Activated CD4-positive, alpha-beta memory T cell treated with anti-CD3 and anti-CD28 coated beads, Interleukin-2, amount 10 ng/mL, durations not matched to agents 7 days and 5 days (primary cell): ENCODE measurements at regions of chr11 and their contacts with region 1.

Region 1: DNA sequence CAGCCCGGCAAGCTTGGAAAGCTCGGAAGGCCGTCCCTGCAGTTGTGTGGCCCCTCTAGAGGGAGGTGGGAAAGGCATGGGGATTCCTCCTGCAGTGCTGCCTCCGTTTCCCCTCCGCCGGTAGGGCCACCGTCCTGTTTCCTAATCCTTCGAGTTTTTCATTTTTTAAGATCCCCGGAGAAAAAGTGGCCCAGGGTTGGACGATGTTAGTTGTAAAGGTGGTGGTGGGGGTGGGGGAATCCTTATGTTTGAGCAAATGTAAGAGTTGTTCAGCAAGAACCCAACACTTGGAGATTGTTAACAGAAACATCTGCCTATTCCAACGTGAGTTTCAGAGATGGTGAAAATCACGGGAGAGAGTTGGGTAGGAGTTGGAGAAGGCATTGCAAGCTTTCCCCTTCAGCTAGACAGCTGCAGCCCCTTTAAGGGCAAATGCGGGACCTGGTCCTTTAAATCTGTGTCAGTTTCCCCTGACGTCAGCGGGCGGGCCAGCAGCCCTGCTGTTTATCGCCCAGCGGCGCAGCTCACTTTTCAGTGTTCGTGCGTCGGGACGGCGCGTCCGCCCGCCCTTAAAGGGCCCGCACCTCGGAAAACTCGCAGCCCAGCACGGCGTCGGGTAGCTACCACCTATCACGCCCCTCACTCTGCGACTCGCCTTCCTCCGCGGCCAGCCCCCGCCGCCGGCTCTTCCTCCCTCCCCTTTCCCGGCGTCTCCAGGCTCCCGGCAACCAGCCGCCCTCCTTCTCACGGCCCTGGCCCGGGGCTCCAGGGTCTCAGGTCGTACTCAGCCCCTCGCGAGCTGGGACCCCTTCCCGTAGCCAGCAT is at the start of gene SIDT2:
- DNase-seq: peak; percentile 93
- H3K4me3 Mint-ChIP-seq: peak within 1 kb of the TSS; percentile 92
- H3K27ac Mint-ChIP-seq: peak within 1 kb of the TSS; percentile 85
- H3K4me1 Mint-ChIP-seq: peaks cover 32% of the 10 kb centered on the region
- H3K27me3 Mint-ChIP-seq: no peaks in the 10 kb centered on the region
- total RNA-seq, gene SIDT2: 38.1 to 42.9 TPM

Region 2: GRCh38 chr11:117143871-117144476 is 34.4 kb before region 1 on chr11 and contains the start of gene PAFAH1B2:
- CTCF ChIA-PET with region 1: interaction called, 39 read pairs
- POLR2A ChIA-PET with region 1: interaction called, 50 read pairs
- DNase-seq: peak; percentile 95
- H3K4me3 Mint-ChIP-seq: peak within 1 kb of the TSS; percentile 96
- H3K27ac Mint-ChIP-seq: peak within 1 kb of the TSS; percentile 86
- H3K4me1 Mint-ChIP-seq: peaks cover 45% of the 10 kb centered on the region
- H3K27me3 Mint-ChIP-seq: peaks cover 17% of the 10 kb centered on the region
- total RNA-seq, gene PAFAH1B2: 60.1 to 62.8 TPM

Region 3: GRCh38 chr11:117327567-117328374 is 149.3 kb after region 1 on chr11 and contains the start of gene CEP164:
- CTCF ChIA-PET with region 1: interaction called, 3 read pairs
- POLR2A ChIA-PET with region 1: interaction called, 13 read pairs
- DNase-seq: peak; percentile 96
- H3K4me3 Mint-ChIP-seq: peak within 1 kb of the TSS; percentile 58
- H3K27ac Mint-ChIP-seq: no peak within 1 kb of the TSS
- H3K4me1 Mint-ChIP-seq: peaks cover 13% of the 10 kb centered on the region
- H3K27me3 Mint-ChIP-seq: peaks cover 4% of the 10 kb centered on the region
- total RNA-seq, gene CEP164: 41.4 to 45.6 TPM